ENCODE measurements at regions of chr9 and their contacts with region 1.

Region 1: GRCh38 chr9:136045971-136046920 is 48.8 kb downstream of the NACC2 start:
- DNase-seq: peak; percentile 91 to 96 (median 94)
- H3K4me3 ChIP-seq: peak overlapping the region; percentile 23 to 91 (median 43)
- H3K4me3 Mint-ChIP-seq: peak overlapping the region; percentile 68 to 85
- H3K27ac ChIP-seq: peak overlapping the region; percentile 93 to 94
- H3K27ac Mint-ChIP-seq: peak overlapping the region in 3 of 7 donors; percentile 93 to 98 (median 97)
- H3K4me1 ChIP-seq: peaks cover 88 to 90% of the 10 kb centered on the region in 2 donors
- H3K4me1 Mint-ChIP-seq: peaks cover 41% of the 10 kb centered on the region
- H3K27me3 ChIP-seq: no peaks in the 10 kb centered on the region
- H3K27me3 Mint-ChIP-seq: peaks cover 0 to 2% (median 0%) of the 10 kb centered on the region in 3 donors
- CTCF ChIP-seq: no peak

Region 2: GRCh38 chr9:135961277-135961705 is 85.0 kb before region 1 on chr9 and contains the start of gene UBAC1:
- intact Hi-C with region 1: loop called (anchors 5 to 10 kb)
- DNase-seq: peak; percentile 94 to 96 (median 95)
- H3K4me3 ChIP-seq: peak within 1 kb of the TSS; percentile 53 to 88 (median 64)
- H3K4me3 Mint-ChIP-seq: peak within 1 kb of the TSS; percentile 93 to 94
- H3K27ac ChIP-seq: peak within 1 kb of the TSS; percentile 63 to 91
- H3K27ac Mint-ChIP-seq: peak within 1 kb of the TSS; percentile 91 to 96 (median 94)
- H3K4me1 ChIP-seq: peaks cover 45 to 51% of the 10 kb centered on the region in 2 donors
- H3K4me1 Mint-ChIP-seq: peaks cover 47% of the 10 kb centered on the region
- H3K27me3 ChIP-seq: no peaks in the 10 kb centered on the region
- H3K27me3 Mint-ChIP-seq: peaks cover 1 to 3% (median 2%) of the 10 kb centered on the region in 3 donors
- CTCF ChIP-seq: peak; percentile 23
- polyA plus RNA-seq, gene UBAC1: 35.8 to 63.1 (median 52.5) TPM

Region 3: GRCh38 chr9:135969064-135969683 is 77.1 kb before region 1 on chr9:
- intact Hi-C with region 1: loop called (anchors 5 to 10 kb)
- DNase-seq: peak; percentile 78 to 89 (median 88)
- H3K4me3 ChIP-seq: peak overlapping the region in 1 of 3 experiments; percentile 31
- H3K4me3 Mint-ChIP-seq: peak overlapping the region; percentile 6 to 62
- H3K27ac ChIP-seq: peak overlapping the region; percentile 67 to 69
- H3K27ac Mint-ChIP-seq: peak overlapping the region; percentile 78 to 93 (median 89)
- H3K4me1 ChIP-seq: peaks cover 42 to 47% of the 10 kb centered on the region in 2 donors
- H3K4me1 Mint-ChIP-seq: peaks cover 45% of the 10 kb centered on the region
- H3K27me3 ChIP-seq: no peaks in the 10 kb centered on the region
- H3K27me3 Mint-ChIP-seq: peaks cover 1 to 5% (median 3%) of the 10 kb centered on the region in 3 donors
- CTCF ChIP-seq: no peak

Region 4: DNA sequence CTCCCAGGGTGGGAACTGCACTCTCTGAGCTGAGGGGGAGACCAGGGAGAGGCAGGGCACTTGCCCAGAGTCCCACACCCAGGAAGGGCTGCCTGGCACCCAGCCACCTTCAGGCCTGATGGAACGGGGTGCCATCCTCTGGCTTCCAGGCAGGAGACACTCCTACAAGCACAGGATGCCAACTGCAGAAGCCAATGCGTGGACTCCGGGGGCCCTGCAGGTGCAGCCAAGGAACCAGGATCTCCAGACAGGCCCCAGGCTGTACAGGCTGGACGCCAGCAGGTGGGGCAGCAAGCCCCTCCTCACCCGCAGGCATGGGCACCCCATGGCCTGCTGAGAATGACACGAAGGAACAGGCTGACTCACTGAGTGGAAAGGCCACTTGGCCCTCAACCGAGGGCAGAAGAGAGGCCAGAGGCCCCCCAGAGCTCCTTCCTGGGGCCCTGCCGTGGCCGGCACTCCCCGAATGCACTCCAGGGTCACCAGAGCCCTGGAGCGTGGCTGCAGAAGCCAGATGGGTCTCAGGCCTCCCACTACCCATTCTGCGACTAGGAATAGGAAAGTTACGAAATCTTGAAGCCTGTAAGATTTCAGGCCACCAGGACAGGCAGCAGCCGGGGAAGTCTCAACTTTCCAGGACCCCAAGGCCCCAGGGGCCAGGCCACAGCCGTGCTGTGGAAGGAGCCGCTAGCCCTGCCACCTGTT is 33.1 kb after region 1 on chr9:
- intact Hi-C with region 1: loop called in 1 of 2 experiments (anchors 5 kb)
- DNase-seq: peak; percentile 46 to 72 (median 53)
- H3K4me3 ChIP-seq: peak overlapping the region in 1 of 3 experiments; percentile 42
- H3K4me3 Mint-ChIP-seq: peak overlapping the region in 1 of 2 donors; percentile 68
- H3K27ac ChIP-seq: peak overlapping the region; percentile 33 to 68
- H3K27ac Mint-ChIP-seq: peak overlapping the region in 6 of 7 donors; percentile 56 to 88 (median 79)
- H3K4me1 ChIP-seq: peaks cover 78 to 95% of the 10 kb centered on the region in 2 donors
- H3K4me1 Mint-ChIP-seq: peaks cover 81% of the 10 kb centered on the region
- H3K27me3 ChIP-seq: no peaks in the 10 kb centered on the region
- H3K27me3 Mint-ChIP-seq: peaks cover 0 to 6% (median 0%) of the 10 kb centered on the region in 3 donors
- CTCF ChIP-seq: peak; percentile 29

Region 5: DNA sequence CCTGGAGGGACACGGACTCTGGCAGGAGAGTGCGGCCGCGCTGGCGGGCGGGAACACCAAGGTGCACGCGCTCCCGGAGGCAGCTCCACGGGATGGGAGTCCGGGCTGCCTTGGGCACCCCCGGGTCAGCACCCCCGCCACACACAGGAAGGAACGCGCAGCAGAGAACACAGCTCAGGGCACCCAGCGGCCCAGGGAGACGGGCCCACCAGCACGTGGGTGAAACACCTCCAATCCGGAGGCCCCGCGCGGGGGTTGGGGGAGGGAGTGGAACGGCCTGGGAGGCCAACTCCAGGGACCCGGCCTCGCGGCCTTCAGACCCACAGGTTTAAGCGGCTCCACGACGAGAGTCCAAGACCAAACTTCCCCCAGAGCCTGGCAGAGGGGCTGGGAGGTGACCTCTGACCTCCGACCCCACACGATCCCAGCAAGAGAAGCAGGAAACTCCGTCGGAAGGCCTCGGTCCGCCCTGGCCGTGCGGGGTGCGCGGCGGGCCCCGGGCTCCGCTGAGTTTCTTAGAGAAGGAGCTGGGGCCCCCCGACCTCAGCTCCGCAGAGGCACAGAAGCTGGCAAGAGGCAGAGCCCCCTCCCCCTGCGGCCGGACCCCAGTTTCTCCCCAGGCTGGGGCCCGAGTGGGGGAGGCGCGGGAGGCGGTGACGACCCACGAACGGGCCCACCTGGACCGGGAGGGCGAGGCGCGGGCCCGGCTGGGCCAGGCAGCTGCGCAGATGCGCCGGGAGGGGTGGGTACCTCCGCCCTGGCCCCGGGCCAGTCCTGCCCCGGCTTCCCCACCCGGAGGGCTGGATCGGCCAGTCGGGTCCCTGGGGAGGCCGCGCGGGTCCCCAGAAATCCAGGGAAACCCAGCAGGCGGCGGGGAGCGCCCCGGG is 48.0 kb after region 1 on chr9:
- intact Hi-C with region 1: loop called (anchors 5 kb)
- DNase-seq: peak; percentile 53 to 56 (median 54)
- H3K4me3 ChIP-seq: peak overlapping the region; percentile 56 to 90 (median 89)
- H3K4me3 Mint-ChIP-seq: peak overlapping the region; percentile 84 to 85
- H3K27ac ChIP-seq: peak overlapping the region; percentile 60 to 73
- H3K27ac Mint-ChIP-seq: peak overlapping the region in 6 of 7 donors; percentile 68 to 90 (median 78)
- H3K4me1 ChIP-seq: peaks cover 66 to 74% of the 10 kb centered on the region in 2 donors
- H3K4me1 Mint-ChIP-seq: peaks cover 59% of the 10 kb centered on the region
- H3K27me3 ChIP-seq: peaks cover 0 to 10% of the 10 kb centered on the region in 2 donors
- H3K27me3 Mint-ChIP-seq: peaks cover 9 to 15% (median 10%) of the 10 kb centered on the region in 3 donors
- CTCF ChIP-seq: no peak

Region 6: DNA sequence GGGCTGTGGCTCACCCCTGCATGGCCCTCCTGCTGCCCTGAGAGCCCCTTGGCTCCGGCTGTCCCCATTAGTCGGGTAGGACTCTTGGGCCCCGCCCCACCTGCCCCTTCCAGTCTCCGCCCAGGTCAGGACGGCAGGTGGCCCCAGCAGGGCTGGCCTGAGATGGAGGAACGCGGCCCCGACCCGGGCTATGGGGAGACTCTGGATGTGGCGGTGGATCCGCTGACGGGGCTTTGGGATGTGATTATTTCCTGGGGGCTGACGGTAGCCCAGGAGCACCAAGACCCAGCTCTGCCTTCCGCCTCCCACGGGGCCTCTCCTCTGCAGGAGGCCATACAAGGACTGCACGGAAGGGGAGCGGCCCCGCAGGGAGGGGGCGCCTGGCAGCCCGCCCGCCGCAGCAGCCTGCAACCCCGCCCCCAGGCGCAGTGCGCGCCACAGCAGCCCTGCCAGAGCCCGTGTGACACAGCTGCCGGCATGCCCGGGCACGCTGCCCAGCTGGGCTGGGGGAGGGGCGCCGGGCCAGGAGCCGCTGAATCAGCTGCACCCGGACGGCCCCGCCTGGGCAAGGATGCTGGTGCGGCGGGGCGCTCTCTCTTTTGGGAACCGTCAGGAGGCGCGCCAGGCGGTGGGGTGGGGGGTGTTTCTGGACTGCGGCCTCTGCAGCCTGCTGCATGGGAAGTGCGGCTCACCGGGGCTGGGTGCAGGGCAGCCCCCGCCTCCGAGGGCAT is 63.3 kb after region 1 on chr9:
- intact Hi-C with region 1: loop called in 1 of 2 experiments (anchors 5 kb)
- DNase-seq: peak; percentile 89 to 93 (median 93)
- H3K4me3 ChIP-seq: peak overlapping the region; percentile 17 to 71 (median 29)
- H3K4me3 Mint-ChIP-seq: peak overlapping the region; percentile 68 to 85
- H3K27ac ChIP-seq: peak overlapping the region in 1 of 2 donors; percentile 52
- H3K27ac Mint-ChIP-seq: peak overlapping the region in 4 of 7 donors; percentile 12 to 78 (median 68)
- H3K4me1 ChIP-seq: peaks cover 53 to 73% of the 10 kb centered on the region in 2 donors
- H3K4me1 Mint-ChIP-seq: peaks cover 73% of the 10 kb centered on the region
- H3K27me3 ChIP-seq: peaks cover 0 to 23% of the 10 kb centered on the region in 2 donors
- H3K27me3 Mint-ChIP-seq: peaks cover 26 to 43% (median 36%) of the 10 kb centered on the region in 3 donors
- CTCF ChIP-seq: no peak

Measured in CD14-positive monocyte (primary cell).